ENCODE measurements at regions of chr2 and their contacts with region 1.

Region 1: DNA sequence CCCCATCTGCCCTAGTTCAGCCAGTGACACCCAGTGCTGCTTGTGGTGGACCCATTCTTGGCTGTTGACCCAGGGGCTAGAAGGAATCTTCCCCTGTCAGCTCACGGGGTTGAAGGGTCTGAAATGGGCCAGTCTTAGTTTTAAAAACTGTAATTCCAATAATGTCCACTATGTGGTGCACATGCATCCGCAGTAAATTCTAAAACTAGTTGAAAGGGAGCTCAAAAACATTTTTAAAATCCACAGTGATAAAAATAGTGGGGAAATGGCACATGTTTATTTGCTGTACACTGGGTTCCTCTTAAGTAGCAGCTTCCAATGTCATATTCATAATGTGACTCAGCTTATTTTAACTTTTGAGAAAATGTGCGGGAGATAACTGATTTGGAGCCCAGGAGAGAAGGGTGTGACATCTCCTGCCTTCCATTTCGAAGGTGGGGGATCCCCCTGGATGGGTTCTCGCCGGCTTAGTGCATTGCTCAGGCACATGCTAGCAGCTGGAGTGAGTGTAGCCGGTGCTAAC is 32.8 kb downstream of the GRHL1 start:
- DNase-seq: peak; percentile 81
- ATAC-seq: peak; percentile 81
- H3K4me3 ChIP-seq: no peak overlapping the region
- H3K4me3 Mint-ChIP-seq: no peak overlapping the region
- H3K27ac ChIP-seq: no peak overlapping the region
- H3K27ac Mint-ChIP-seq: no peak overlapping the region
- H3K4me1 ChIP-seq: peaks cover 5 to 6% of the 10 kb centered on the region in 2 donors
- H3K4me1 Mint-ChIP-seq: peaks cover 4% of the 10 kb centered on the region
- H3K27me3 ChIP-seq: peaks cover 0 to 5% (median 0%) of the 10 kb centered on the region in 4 experiments
- H3K27me3 Mint-ChIP-seq: peaks cover 15% of the 10 kb centered on the region
- CTCF ChIP-seq: peak; percentile 87

Region 2: DNA sequence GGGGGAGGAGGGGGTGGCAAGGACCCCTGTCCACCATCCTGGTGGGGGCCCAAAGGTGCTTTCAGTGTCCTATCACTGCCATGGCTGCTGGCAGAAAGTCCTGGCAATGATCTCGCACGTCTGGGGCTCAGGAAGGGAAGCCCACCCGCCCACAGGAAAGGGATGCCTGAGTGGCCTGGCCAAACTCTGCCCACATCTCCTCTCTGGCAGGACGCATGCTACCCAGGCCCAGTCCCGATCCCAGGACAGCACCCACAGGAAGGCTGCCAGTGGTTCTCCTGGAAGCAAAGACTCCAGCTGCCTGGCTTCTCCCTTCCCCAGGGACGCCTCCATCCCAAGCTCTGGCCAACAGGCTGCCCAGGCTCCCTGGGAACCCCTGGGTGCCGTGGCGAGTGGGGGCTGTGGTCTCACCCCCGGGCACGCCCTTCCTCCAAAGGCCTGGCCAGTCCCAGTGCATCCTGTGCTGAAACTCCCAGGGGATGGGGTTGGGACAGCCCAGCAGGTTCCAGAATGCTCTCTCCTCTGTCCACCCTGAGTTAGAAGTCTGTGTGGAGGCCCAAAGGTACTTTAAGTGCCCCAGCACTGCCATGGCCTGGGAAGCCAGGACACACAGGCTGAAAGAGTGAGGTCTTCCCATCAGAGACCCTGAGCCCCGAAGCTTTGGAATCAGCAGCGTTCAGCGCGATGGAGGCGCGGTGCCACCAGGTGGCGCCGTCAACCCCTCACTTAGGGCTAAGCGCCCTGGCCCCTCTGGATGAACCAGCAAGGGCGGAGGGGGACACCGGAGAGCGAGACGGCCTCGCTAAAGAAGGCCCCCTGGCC is 170.8 kb before region 1 on chr2:
- CTCF ChIA-PET with region 1: interaction called, 30 read pairs
- POLR2A ChIA-PET with region 1: no interaction called
- intact Hi-C with region 1: loop called (anchors 1 kb)
- DNase-seq: peak; percentile 77
- ATAC-seq: peak; percentile 65
- H3K4me3 ChIP-seq: no peak overlapping the region
- H3K4me3 Mint-ChIP-seq: no peak overlapping the region
- H3K27ac ChIP-seq: no peak overlapping the region
- H3K27ac Mint-ChIP-seq: no peak overlapping the region
- H3K4me1 ChIP-seq: peaks cover 6 to 10% of the 10 kb centered on the region in 2 donors
- H3K4me1 Mint-ChIP-seq: peaks cover 7% of the 10 kb centered on the region
- H3K27me3 ChIP-seq: peaks cover 0 to 10% (median 5%) of the 10 kb centered on the region in 4 experiments
- H3K27me3 Mint-ChIP-seq: peaks cover 13% of the 10 kb centered on the region
- CTCF ChIP-seq: peak; percentile 96

Region 3: GRCh38 chr2:9961013-9961412 is 23.3 kb before region 1 on chr2:
- CTCF ChIA-PET with region 1: interaction called, 17 read pairs
- POLR2A ChIA-PET with region 1: no interaction called
- intact Hi-C with region 1: no loop called
- DNase-seq: no peak
- ATAC-seq: no peak
- H3K4me3 ChIP-seq: no peak overlapping the region
- H3K4me3 Mint-ChIP-seq: no peak overlapping the region
- H3K27ac ChIP-seq: no peak overlapping the region
- H3K27ac Mint-ChIP-seq: no peak overlapping the region
- H3K4me1 ChIP-seq: no peaks in the 10 kb centered on the region
- H3K4me1 Mint-ChIP-seq: peaks cover 5% of the 10 kb centered on the region
- H3K27me3 ChIP-seq: peaks cover 0 to 4% (median 0%) of the 10 kb centered on the region in 4 experiments
- H3K27me3 Mint-ChIP-seq: peaks cover 16% of the 10 kb centered on the region
- CTCF ChIP-seq: no peak

Region 4: GRCh38 chr2:9995059-9995458 is 10.8 kb after region 1 on chr2:
- CTCF ChIA-PET with region 1: interaction called, 19 read pairs
- POLR2A ChIA-PET with region 1: no interaction called
- intact Hi-C with region 1: no loop called
- DNase-seq: no peak
- ATAC-seq: no peak
- H3K4me3 ChIP-seq: no peak overlapping the region
- H3K4me3 Mint-ChIP-seq: no peak overlapping the region
- H3K27ac ChIP-seq: no peak overlapping the region
- H3K27ac Mint-ChIP-seq: no peak overlapping the region
- H3K4me1 ChIP-seq: no peaks in the 10 kb centered on the region
- H3K4me1 Mint-ChIP-seq: no peaks in the 10 kb centered on the region
- H3K27me3 ChIP-seq: no peaks in the 10 kb centered on the region
- H3K27me3 Mint-ChIP-seq: no peaks in the 10 kb centered on the region
- CTCF ChIP-seq: no peak

Region 5: DNA sequence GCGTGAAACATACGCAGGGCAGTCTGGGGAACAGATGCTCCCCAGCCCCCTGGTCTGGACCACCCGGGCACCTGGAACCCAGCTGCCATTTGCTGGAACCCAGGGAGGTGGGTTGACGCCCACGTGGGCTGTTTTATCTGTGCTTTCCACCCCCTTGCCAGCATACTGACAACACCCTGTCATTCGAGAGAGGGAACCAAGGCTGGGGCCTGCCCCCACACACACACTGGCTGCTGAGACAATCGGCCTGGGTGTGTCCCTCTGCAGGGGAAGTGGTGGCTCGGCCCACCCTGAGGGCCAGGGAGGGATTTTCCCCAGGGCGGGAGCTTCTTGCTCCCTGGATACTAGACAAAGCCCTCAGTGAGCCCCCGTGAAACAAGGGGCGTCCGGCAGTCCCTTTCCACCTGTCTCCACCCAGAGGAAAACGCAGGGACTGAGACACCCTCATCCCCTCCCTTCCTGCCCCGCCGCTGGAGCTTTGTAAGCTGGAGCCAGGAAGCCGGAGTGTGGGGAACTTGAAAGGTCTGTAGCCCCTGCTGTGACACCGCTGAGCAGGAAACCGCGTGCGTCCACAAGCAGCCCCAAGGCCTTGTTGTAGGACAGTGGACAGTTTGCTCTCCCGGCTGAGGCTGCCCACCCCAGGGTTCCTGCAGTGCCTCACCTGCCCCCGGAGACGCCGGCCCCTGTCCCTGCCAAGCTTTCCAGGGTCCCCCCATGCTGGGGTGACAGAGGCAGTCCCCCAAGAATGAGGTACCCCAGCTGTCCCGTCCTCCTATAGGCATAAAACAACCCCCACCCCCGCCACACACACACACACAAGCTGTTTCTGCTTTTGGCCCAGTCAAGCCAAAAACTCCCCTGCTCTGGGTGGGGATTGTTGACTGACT is 45.0 kb after region 1 on chr2:
- CTCF ChIA-PET with region 1: interaction called, 59 read pairs
- POLR2A ChIA-PET with region 1: no interaction called
- intact Hi-C with region 1: loop called (anchors 1 kb)
- DNase-seq: peak; percentile 90
- ATAC-seq: peak; percentile 98
- H3K4me3 ChIP-seq: peak overlapping the region; percentile 16 to 76 (median 59)
- H3K4me3 Mint-ChIP-seq: peak overlapping the region; percentile 82
- H3K27ac ChIP-seq: peak overlapping the region; percentile 75 to 96
- H3K27ac Mint-ChIP-seq: peak overlapping the region; percentile 86
- H3K4me1 ChIP-seq: peaks cover 44 to 59% of the 10 kb centered on the region in 2 donors
- H3K4me1 Mint-ChIP-seq: peaks cover 48% of the 10 kb centered on the region
- H3K27me3 ChIP-seq: no peaks in the 10 kb centered on the region
- H3K27me3 Mint-ChIP-seq: no peaks in the 10 kb centered on the region
- CTCF ChIP-seq: no peak

Region 6: DNA sequence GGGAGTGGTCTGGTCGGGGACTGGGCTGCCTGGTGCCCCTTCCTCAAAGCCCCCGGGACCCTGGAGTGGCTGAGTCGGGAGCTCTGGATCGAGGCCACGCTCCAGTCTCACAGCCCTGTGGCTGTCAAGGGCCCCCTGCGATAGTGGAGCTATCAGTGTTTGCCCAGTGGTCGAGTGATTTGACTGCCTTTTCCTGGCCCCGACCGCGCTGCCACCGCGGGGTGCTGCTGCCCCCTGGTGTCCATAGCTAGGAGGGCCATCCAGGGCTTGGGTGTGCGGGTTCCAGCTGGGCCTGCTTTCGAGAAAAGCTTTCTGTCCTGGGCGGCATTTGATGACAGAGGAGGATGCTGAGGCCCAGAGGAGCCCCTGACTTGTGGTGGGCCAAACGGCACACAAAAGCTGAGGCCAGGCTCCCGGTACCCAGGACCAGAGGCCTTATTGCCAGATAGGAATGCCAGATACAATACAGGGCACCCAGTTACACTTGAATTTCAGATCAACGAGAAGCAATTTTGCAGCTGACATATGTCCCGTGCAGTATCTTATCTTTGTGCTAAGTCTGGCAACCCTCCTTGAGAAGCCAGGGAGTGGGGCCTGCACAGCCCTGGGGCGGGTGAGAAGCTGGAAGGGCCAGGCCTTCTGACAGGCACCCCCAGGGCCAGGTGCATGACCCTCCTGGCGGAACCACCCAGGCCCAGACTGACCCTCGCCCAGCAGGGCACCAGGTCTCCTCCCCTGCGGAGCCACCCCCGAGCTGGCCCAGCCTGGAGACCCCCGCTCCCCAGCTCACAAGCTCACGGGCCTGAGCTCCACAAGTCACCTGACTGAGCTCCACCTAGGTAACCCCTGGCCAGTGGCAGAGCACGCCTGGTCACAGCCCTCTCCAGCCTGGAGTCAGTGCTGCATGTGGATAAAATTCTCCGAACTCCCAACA is 450.9 kb after region 1 on chr2:
- CTCF ChIA-PET with region 1: interaction called, 12 read pairs
- POLR2A ChIA-PET with region 1: no interaction called
- intact Hi-C with region 1: no loop called
- DNase-seq: peak; percentile 88
- ATAC-seq: peak; percentile 79
- H3K4me3 ChIP-seq: no peak overlapping the region
- H3K4me3 Mint-ChIP-seq: no peak overlapping the region
- H3K27ac ChIP-seq: no peak overlapping the region
- H3K27ac Mint-ChIP-seq: peak overlapping the region; percentile 74
- H3K4me1 ChIP-seq: peaks cover 12 to 18% of the 10 kb centered on the region in 2 donors
- H3K4me1 Mint-ChIP-seq: peaks cover 19% of the 10 kb centered on the region
- H3K27me3 ChIP-seq: peaks cover 0 to 4% (median 0%) of the 10 kb centered on the region in 4 experiments
- H3K27me3 Mint-ChIP-seq: no peaks in the 10 kb centered on the region
- CTCF ChIP-seq: peak; percentile 93